Motor neuron (in vitro differentiated cells): ENCODE measurements at regions of chr1 and their contacts with region 1.

Region 1: DNA sequence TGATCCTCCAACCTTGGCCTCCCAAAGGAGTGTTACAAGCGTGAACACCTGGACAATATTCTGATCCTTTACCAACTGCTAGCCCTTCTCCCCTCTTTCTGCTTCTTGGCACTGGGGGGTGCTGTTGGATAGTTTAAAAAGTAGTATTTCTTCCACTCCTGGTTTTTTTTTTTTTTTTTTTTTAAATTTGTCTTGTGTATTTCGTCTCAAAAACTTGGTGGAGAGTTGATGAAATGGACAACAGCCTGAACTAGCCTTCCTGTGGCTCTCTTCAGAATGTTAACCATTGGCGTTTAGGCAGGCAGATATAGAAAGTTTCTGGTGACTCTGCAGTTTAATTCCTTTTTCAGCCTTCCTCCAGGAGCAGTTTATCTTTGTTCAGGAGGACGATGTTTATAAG is 69.7 kb upstream of the USP24 start:
- ATAC-seq: peak in 3 of 8 experiments; percentile 63 to 74 (median 69)
- H3K4me3 ChIP-seq: no peak overlapping the region
- H3K27ac ChIP-seq: no peak overlapping the region
- H3K4me1 ChIP-seq: no peaks in the 10 kb centered on the region

Region 2: GRCh38 chr1:56584910-56585528 is 1300.2 kb after region 1 on chr1:
- in situ Hi-C with region 1: loop called in 7 of 9 experiments (anchors 10 to 25 kb)
- ATAC-seq: peak in 5 of 8 experiments; percentile 29 to 56 (median 41)
- H3K4me3 ChIP-seq: no peak overlapping the region
- H3K27ac ChIP-seq: no peak overlapping the region
- H3K4me1 ChIP-seq: peaks cover 0 to 1% of the 10 kb centered on the region in 2 donors